Pancreas (tissue), 10 donors: ENCODE measurements at regions of chr14 and their contacts with region 1.

Region 1: GRCh38 chr14:22653012-22653621 is 9.0 kb upstream of the OR6J1 start:
- DNase-seq: peak; percentile 46 to 82 (median 64)
- ATAC-seq: peak; percentile 92 to 99 (median 96)
- H3K4me3 ChIP-seq: no peak overlapping the region
- H3K27ac ChIP-seq: no peak overlapping the region
- H3K4me1 ChIP-seq: no peaks in the 10 kb centered on the region
- H3K27me3 ChIP-seq: no peaks in the 10 kb centered on the region
- CTCF ChIP-seq: peak; percentile 65 to 73 (median 66)

Region 2: DNA sequence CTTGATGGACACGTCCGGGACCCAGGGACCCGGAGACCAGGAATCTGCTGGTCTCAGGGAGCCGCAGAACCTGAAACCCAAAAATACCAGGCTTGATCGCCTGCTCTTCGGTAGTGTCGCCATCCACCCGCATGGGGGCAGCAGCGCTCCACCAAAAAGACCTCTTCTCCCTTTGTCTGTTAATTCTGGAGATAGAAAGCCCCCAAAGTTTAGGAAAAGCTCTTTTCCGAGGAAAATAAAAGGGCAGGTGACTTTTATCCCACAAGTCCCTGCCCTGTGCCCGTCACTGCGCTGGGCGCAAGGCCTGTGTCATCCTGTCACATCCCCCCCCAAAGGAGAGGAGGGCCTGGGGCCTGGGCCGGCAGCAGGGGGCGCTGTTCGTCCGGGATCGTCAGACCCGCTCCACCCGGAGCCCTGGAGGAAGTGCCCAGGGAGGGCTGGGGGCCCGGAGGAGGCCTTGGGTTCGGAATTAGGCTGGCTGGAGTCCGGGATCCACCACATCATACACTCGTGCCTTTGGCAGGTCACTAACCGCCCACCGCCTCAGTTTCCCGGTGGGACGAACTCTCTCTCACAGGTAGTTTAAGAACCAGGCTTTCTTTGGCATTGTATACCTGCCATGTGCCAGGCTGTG is 96.0 kb before region 1 on chr14:
- intact Hi-C with region 1: loop called in 2 of 3 experiments (anchors 5 to 10 kb)
- DNase-seq: peak; percentile 74 to 99 (median 89)
- ATAC-seq: peak; percentile 80 to 89 (median 86)
- H3K4me3 ChIP-seq: peak overlapping the region in 2 of 4 donors; percentile 10 to 30
- H3K27ac ChIP-seq: peak overlapping the region in 2 of 4 donors; percentile 87 to 90
- H3K4me1 ChIP-seq: peaks cover 19 to 48% (median 41%) of the 10 kb centered on the region in 3 donors
- H3K27me3 ChIP-seq: no peaks in the 10 kb centered on the region
- CTCF ChIP-seq: peak; percentile 94 to 99 (median 96)

Region 3: DNA sequence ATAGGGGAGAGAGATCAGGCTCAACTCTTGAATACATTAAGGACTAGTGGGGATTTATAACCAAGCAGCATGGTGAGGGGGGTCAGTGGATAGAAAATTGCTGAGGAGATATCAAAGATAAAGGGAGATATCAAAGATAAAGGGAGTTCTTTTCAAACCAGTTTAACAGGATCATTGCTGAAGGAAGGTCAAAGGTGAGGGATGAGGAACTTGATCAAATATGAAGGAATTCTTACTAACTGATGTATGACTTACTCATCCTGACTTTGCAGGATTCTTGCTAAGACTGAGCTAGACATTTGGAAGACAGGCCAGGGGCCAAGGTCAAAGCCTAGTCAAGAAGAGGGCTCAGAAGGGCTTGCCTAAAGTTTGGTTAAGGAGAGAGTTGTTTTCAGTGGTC is 50.3 kb before region 1 on chr14:
- intact Hi-C with region 1: loop called in 1 of 3 experiments (anchors 10 kb)
- DNase-seq: no peak
- ATAC-seq: no peak
- H3K4me3 ChIP-seq: no peak overlapping the region
- H3K27ac ChIP-seq: no peak overlapping the region
- H3K4me1 ChIP-seq: peaks cover 10 to 17% (median 10%) of the 10 kb centered on the region in 3 donors
- H3K27me3 ChIP-seq: no peaks in the 10 kb centered on the region
- CTCF ChIP-seq: no peak

Region 4: GRCh38 chr14:22689186-22689585 is 36.1 kb after region 1 on chr14:
- intact Hi-C with region 1: no loop called
- DNase-seq: peak in 1 of 6 donors; percentile 25
- ATAC-seq: peak in 3 of 4 donors; percentile 42 to 83 (median 53)
- H3K4me3 ChIP-seq: no peak overlapping the region
- H3K27ac ChIP-seq: no peak overlapping the region
- H3K4me1 ChIP-seq: no peaks in the 10 kb centered on the region
- H3K27me3 ChIP-seq: no peaks in the 10 kb centered on the region
- CTCF ChIP-seq: no peak

Region 5: GRCh38 chr14:22852940-22853767 is 200.0 kb after region 1 on chr14:
- intact Hi-C with region 1: loop called in 1 of 3 experiments (anchors 10 kb)
- DNase-seq: peak; percentile 79 to 99 (median 92)
- ATAC-seq: peak; percentile 74 to 90 (median 86)
- H3K4me3 ChIP-seq: peak overlapping the region in 3 of 4 donors; percentile 9 to 50 (median 37)
- H3K27ac ChIP-seq: peak overlapping the region; percentile 53 to 85 (median 69)
- H3K4me1 ChIP-seq: peaks cover 12 to 14% (median 14%) of the 10 kb centered on the region in 3 donors
- H3K27me3 ChIP-seq: no peaks in the 10 kb centered on the region
- CTCF ChIP-seq: peak; percentile 90 to 96 (median 91)